ENCODE measurements at regions of chr2 and their contacts with region 1.

Region 1: DNA sequence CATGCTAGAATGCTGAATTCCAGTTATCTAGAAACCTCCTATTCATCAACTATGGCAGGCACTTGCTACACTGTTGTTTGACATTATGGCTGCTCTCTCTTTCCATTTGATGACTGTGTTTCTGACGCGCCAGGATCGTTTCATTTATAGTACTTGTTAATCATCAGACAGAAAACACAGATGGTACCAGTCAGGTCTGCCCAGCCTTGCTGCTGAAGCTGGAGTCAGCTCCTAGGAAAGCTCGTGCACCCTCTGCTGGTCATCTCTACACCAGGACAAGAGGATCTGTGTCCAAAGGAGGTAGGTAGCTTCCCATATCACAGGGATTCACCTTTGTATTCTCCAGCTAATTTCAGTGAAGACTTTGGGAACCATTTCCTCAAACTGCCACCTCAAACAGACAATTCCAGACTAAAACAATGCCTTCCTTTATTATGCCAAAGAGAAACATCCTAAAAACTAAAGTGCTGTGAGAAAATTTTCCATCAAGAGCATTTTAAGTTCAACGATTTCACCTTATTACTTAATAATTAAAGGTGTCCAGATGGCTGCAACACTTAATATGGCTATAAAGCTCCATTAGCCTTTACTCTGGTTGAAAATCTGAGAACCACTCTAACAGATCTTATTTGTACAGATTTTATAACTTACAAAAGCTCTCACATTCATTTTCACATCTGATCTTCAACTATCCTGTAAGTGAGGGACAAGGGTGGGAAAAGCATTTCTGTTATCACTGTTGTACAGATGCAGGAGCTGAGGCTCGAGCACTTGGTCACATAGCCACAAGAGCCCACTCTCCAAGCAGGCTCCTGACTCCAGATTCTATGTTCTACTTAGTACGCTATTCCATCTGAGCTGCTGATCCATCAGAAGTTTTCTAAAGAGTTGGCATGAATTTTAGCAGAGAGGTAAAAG is 17.5 kb downstream of the METTL8 start:
- DNase-seq: peak; percentile 95
- H3K4me3 ChIP-seq: no peak overlapping the region
- H3K27ac ChIP-seq: no peak overlapping the region
- H3K4me1 ChIP-seq: peaks cover 13% of the 10 kb centered on the region
- H3K27me3 ChIP-seq: no peaks in the 10 kb centered on the region
- CTCF ChIP-seq: peak; percentile 84 to 85
- POLR2A ChIP-seq: no peak

Region 2: GRCh38 chr2:170928824-170929685 is 487.2 kb before region 1 on chr2 and contains the start of gene GORASP2:
- CTCF ChIA-PET with region 1: interaction called, 6 read pairs
- POLR2A ChIA-PET with region 1: no interaction called
- dilution Hi-C with region 1: no loop called
- intact Hi-C with region 1: loop called (anchors 1 kb)
- DNase-seq: peak; percentile 99
- H3K4me3 ChIP-seq: peak within 1 kb of the TSS; percentile 80 to 98 (median 91)
- H3K27ac ChIP-seq: peak within 1 kb of the TSS; percentile 70
- H3K4me1 ChIP-seq: peaks cover 16% of the 10 kb centered on the region
- H3K27me3 ChIP-seq: no peaks in the 10 kb centered on the region
- CTCF ChIP-seq: peak; percentile 88 to 99
- POLR2A ChIP-seq: peak; percentile 92
- total RNA-seq, gene GORASP2: 93.7 and 104 TPM in 2 replicates

Region 3: GRCh38 chr2:171008550-171009205 is 407.6 kb before region 1 on chr2:
- CTCF ChIA-PET with region 1: interaction called, 11 read pairs
- POLR2A ChIA-PET with region 1: no interaction called
- dilution Hi-C with region 1: no loop called
- intact Hi-C with region 1: no loop called
- DNase-seq: no peak
- H3K4me3 ChIP-seq: no peak overlapping the region
- H3K27ac ChIP-seq: no peak overlapping the region
- H3K4me1 ChIP-seq: no peaks in the 10 kb centered on the region
- H3K27me3 ChIP-seq: no peaks in the 10 kb centered on the region
- CTCF ChIP-seq: no peak
- POLR2A ChIP-seq: no peak

Region 4: DNA sequence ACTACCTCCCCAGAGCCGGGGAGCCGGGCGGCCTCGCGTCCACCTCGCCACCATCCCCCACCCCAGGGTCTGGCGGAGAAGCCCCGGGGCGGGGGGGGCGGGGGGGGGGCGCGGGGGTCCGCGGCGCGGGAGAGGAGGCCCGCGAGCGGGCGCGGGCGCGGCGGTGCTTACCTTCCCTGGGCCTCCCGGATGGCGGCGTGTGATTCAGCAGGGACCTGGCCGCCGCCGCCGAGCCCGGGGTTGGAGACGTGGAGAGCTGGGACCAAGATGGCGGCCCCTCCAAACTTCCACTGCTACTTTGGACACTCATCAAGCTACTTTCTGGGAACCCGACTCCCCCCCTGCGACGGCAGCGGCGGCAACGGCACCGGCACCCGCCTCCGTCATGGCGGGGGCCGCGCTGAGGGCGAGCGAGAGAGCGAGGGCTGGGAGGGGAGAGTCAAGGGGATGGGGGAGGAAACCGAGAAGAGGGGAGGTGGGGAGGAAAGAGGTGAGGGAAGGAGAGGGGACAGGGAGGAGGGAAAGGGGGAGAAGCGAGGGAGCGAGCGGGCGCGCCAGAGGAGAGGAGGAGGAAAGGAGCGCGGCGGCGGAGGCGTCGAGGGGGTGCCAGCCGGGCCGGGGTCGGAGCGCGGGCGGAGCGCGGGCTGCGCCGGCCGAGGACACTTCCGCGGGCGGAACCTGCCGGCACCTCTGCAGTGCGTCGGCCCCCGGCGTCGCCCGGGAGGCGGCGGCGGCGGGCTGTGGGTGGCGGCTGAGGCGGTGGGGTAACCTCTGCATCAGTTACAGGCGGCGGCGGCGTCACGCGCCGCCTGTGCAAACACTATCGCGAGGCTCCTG is 255.9 kb before region 1 on chr2 and contains the start of gene TLK1:
- CTCF ChIA-PET with region 1: interaction called, 81 read pairs
- POLR2A ChIA-PET with region 1: no interaction called
- dilution Hi-C with region 1: no loop called
- intact Hi-C with region 1: loop called (anchors 1 kb)
- DNase-seq: peak; percentile 69
- H3K4me3 ChIP-seq: peak within 1 kb of the TSS; percentile 93 to 100 (median 99)
- H3K27ac ChIP-seq: peak within 1 kb of the TSS; percentile 86
- H3K4me1 ChIP-seq: peaks cover 13% of the 10 kb centered on the region
- H3K27me3 ChIP-seq: no peaks in the 10 kb centered on the region
- CTCF ChIP-seq: no peak
- POLR2A ChIP-seq: no peak
- total RNA-seq, gene TLK1: 53.7 and 62.7 TPM in 2 replicates

Region 5: GRCh38 chr2:171347591-171348032 is 68.7 kb before region 1 on chr2:
- CTCF ChIA-PET with region 1: interaction called, 23 read pairs
- POLR2A ChIA-PET with region 1: no interaction called
- dilution Hi-C with region 1: no loop called
- intact Hi-C with region 1: loop called (anchors 1 kb)
- DNase-seq: peak; percentile 59
- H3K4me3 ChIP-seq: no peak overlapping the region
- H3K27ac ChIP-seq: no peak overlapping the region
- H3K4me1 ChIP-seq: peaks cover 16% of the 10 kb centered on the region
- H3K27me3 ChIP-seq: no peaks in the 10 kb centered on the region
- CTCF ChIP-seq: no peak
- POLR2A ChIP-seq: no peak

Region 6: GRCh38 chr2:171482877-171483276 is 66.6 kb after region 1 on chr2:
- CTCF ChIA-PET with region 1: no interaction called
- POLR2A ChIA-PET with region 1: no interaction called
- dilution Hi-C with region 1: no loop called
- intact Hi-C with region 1: no loop called
- DNase-seq: no peak
- H3K4me3 ChIP-seq: no peak overlapping the region
- H3K27ac ChIP-seq: no peak overlapping the region
- H3K4me1 ChIP-seq: peaks cover 16% of the 10 kb centered on the region
- H3K27me3 ChIP-seq: no peaks in the 10 kb centered on the region
- CTCF ChIP-seq: no peak
- POLR2A ChIP-seq: no peak

Region 7: GRCh38 chr2:171509945-171510731 is 93.9 kb after region 1 on chr2:
- CTCF ChIA-PET with region 1: no interaction called
- POLR2A ChIA-PET with region 1: no interaction called
- dilution Hi-C with region 1: no loop called
- intact Hi-C with region 1: no loop called
- DNase-seq: no peak
- H3K4me3 ChIP-seq: no peak overlapping the region
- H3K27ac ChIP-seq: no peak overlapping the region
- H3K4me1 ChIP-seq: no peaks in the 10 kb centered on the region
- H3K27me3 ChIP-seq: peaks cover 0 to 3% of the 10 kb centered on the region in 2 experiments
- CTCF ChIP-seq: no peak
- POLR2A ChIP-seq: no peak

Measured in endothelial cell of umbilical vein (primary cell).